ENCODE measurements at regions of chr1 and their contacts with region 1.

Region 1: DNA sequence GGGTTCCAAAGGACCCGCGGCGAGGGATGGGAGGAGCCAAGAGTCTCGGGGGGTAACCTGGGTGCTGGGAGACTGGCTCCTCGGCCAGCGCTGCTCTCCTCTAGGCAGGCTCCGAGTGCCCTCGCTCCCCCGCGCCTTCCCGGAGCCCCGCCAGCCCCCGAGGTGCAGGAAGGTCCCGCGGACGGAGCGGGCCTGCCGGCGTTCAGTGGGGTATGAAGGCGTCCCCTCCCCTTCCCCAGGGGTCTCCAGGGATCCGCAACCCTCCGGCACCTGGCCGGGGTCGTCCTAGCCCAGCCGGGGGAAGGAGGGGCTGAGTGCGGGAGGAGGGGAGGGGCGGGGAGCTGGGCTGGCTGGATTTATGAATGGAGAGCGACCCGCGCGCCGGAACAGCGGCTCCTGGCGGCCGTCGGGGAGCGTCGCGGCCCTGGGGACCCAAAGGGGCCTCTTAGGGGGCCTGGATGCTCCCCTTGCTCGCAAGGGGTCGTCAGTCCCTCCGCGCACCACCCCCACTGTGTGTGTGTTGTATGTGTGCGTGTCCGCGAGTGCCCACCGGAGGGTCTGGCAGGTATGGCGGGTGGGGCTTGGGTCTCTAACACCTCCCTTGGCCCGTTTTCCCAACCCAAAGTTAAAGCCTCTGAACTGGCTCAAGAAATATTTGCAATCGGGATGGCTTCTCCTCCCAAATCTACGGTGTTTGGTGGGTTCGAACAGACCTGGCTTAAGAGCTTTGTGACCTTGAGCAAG is 600 bp downstream of the HCRTR1 start:
- DNase-seq: peak; percentile 82
- CTCF ChIP-seq: peak; percentile 77

Region 2: GRCh38 chr1:31564134-31564989 is 53.7 kb before region 1 on chr1:
- CTCF ChIA-PET with region 1: interaction called, 28 read pairs
- POLR2A ChIA-PET with region 1: no interaction called
- DNase-seq: peak; percentile 78
- CTCF ChIP-seq: peak; percentile 79

Region 3: GRCh38 chr1:31587720-31588394 is 30.2 kb before region 1 on chr1:
- CTCF ChIA-PET with region 1: interaction called, 11 read pairs
- POLR2A ChIA-PET with region 1: no interaction called
- DNase-seq: peak; percentile 82
- CTCF ChIP-seq: peak; percentile 73

Region 4: GRCh38 chr1:31605908-31606427 is 12.1 kb before region 1 on chr1:
- CTCF ChIA-PET with region 1: interaction called, 41 read pairs
- POLR2A ChIA-PET with region 1: no interaction called
- DNase-seq: peak; percentile 87
- CTCF ChIP-seq: no peak

Region 5: DNA sequence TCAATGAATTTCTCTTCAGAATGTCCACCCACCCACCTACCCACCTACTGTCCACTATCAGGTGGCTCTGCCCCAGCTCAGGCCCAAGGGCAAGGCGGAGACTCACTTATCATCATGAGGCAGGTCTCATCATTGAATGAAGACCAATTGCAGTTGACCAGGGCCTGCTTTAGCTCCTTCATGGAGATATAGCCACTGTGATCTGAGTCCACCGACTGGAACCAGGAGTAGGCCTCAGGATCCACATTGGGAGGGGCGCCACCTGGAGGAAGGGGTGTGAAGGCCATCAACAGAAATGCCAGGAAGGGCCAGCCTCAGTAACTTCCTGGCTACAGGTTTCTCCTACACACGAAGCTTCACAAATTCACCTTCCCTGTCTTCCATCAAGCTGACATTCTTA is 15.0 kb after region 1 on chr1:
- CTCF ChIA-PET with region 1: interaction called, 52 read pairs
- POLR2A ChIA-PET with region 1: interaction called, 4 read pairs
- DNase-seq: no peak
- CTCF ChIP-seq: peak; percentile 29

Measured in GM10248 (cell line).